Endothelial cell of umbilical vein (primary cell): ENCODE measurements at regions of chr15 and their contacts with region 1.

Region 1: GRCh38 chr15:70362886-70363285 is 265.2 kb upstream of the TLE3 start:
- DNase-seq: peak; percentile 38
- H3K4me3 ChIP-seq: no peak overlapping the region
- H3K27ac ChIP-seq: no peak overlapping the region
- H3K4me1 ChIP-seq: no peaks in the 10 kb centered on the region
- H3K27me3 ChIP-seq: no peaks in the 10 kb centered on the region
- CTCF ChIP-seq: peak; percentile 55 to 87
- POLR2A ChIP-seq: no peak

Region 2: GRCh38 chr15:70259028-70259424 is 103.9 kb before region 1 on chr15:
- CTCF ChIA-PET with region 1: interaction called, 4 read pairs
- POLR2A ChIA-PET with region 1: no interaction called
- dilution Hi-C with region 1: no loop called
- intact Hi-C with region 1: loop called (anchors 1 kb)
- DNase-seq: peak; percentile 49
- H3K4me3 ChIP-seq: no peak overlapping the region
- H3K27ac ChIP-seq: no peak overlapping the region
- H3K4me1 ChIP-seq: no peaks in the 10 kb centered on the region
- H3K27me3 ChIP-seq: peaks cover 0 to 3% of the 10 kb centered on the region in 2 experiments
- CTCF ChIP-seq: no peak
- POLR2A ChIP-seq: no peak

Region 3: GRCh38 chr15:70281811-70282307 is 81.0 kb before region 1 on chr15:
- CTCF ChIA-PET with region 1: no interaction called
- POLR2A ChIA-PET with region 1: no interaction called
- dilution Hi-C with region 1: no loop called
- intact Hi-C with region 1: no loop called
- DNase-seq: no peak
- H3K4me3 ChIP-seq: no peak overlapping the region
- H3K27ac ChIP-seq: no peak overlapping the region
- H3K4me1 ChIP-seq: no peaks in the 10 kb centered on the region
- H3K27me3 ChIP-seq: no peaks in the 10 kb centered on the region
- CTCF ChIP-seq: no peak
- POLR2A ChIP-seq: no peak